Left ventricle myocardium superior (tissue), 1 donor: ENCODE measurements at regions of chr6 and their contacts with region 1.

Region 1: GRCh38 chr6:30013291-30013922 is 47.7 kb upstream of the POLR1H start:
- DNase-seq: no peak
- ATAC-seq: peak; percentile 66

Region 2: GRCh38 chr6:29847871-29848630 is 165.4 kb before region 1 on chr6:
- intact Hi-C with region 1: loop called (anchors 2 kb)
- DNase-seq: peak; percentile 90
- ATAC-seq: peak; percentile 93

Region 3: GRCh38 chr6:29864037-29864795 is 149.2 kb before region 1 on chr6:
- intact Hi-C with region 1: no loop called
- DNase-seq: no peak
- ATAC-seq: no peak

Region 4: DNA sequence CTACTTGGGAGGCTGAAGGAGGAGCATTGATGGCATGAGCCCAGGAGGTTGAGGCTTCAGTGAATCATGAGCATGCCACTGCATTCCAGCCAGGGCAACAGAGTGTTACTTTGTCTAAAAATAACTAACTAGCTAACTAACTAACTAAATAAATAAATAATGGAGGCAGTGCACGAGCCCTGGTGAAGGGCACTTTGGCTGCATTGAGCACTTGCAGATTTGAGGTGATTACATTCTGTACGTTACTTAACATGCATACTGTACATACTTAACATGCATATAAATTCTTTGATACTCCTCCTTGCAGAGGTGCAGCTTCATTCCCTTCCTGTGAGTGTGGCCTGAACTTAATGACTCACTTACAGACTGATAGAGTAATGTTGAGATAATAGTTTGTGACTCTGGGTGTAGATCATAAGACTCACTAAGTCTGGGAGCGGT is 60.4 kb before region 1 on chr6:
- intact Hi-C with region 1: no loop called
- DNase-seq: no peak
- ATAC-seq: peak; percentile 80